Adrenal gland (tissue), 19 donors: ENCODE measurements at regions of chr15 and their contacts with region 1.

Region 1: GRCh38 chr15:55434989-55435825 is 26.9 kb downstream of the PIERCE2 start:
- DNase-seq: no peak
- H3K4me3 ChIP-seq: no peak overlapping the region
- H3K27ac ChIP-seq: no peak overlapping the region
- H3K4me1 ChIP-seq: no peaks in the 10 kb centered on the region
- H3K27me3 ChIP-seq: no peaks in the 10 kb centered on the region
- CTCF ChIP-seq: peak; percentile 33 to 58 (median 47)
- POLR2A ChIP-seq: no peak

Region 2: DNA sequence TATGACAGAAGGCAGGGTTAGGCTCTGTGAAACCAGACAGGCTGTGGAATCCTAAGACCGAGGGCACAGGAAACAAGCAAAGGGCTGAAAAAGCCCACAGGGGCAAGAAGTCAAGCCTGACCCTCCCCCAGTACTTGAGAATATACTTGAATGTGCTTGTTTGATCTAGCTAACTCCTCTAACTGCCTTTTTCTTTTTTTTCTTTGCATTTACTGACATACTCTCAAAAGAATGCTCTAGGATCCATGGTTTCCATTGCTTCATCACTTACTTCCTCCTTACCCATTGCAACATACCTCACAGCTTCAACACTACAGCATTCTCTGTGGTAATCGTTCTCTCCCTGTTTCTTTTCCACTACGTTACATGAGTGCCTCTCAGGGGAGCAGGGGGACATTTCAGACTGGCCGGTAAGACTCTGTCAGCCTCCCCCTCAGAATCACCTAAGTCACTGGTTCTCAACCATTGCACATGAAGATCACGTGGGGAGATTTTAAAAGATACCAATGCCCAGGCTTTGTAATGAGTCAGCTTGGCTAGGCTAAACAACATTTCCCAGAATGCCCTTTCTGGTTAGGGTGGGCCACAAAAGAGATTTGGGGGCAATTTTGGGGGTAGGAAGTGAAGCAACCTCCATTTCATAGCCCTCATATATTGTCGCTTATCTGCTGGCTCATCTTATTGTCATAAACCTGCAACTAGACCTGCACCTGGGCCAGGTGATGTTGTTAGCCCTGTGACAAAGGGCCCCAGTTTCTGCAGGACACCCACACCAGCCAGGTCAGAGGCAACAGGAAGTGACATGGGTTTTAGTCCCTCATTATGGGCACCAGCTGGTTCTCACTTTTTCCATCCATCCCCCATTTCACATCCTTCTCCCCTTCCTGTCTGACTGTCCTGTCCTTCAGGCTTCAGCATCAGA is 213.9 kb before region 1 on chr15:
- intact Hi-C with region 1: loop called in 1 of 2 experiments (anchors 10 kb)
- DNase-seq: peak in 3 of 7 donors; percentile 26 to 32 (median 27)
- H3K4me3 ChIP-seq: no peak overlapping the region
- H3K27ac ChIP-seq: peak overlapping the region in 2 of 5 donors; percentile 53 to 74
- H3K4me1 ChIP-seq: peaks cover 0 to 5% of the 10 kb centered on the region in 2 donors
- H3K27me3 ChIP-seq: no peaks in the 10 kb centered on the region
- CTCF ChIP-seq: no peak
- POLR2A ChIP-seq: no peak

Region 3: GRCh38 chr15:55290528-55291057 is 144.6 kb before region 1 on chr15:
- intact Hi-C with region 1: loop called in 1 of 2 experiments (anchors 10 kb)
- DNase-seq: peak; percentile 83 to 92 (median 88)
- H3K4me3 ChIP-seq: peak overlapping the region in 2 of 4 donors; percentile 75 to 87
- H3K27ac ChIP-seq: peak overlapping the region; percentile 83 to 94 (median 87)
- H3K4me1 ChIP-seq: peaks cover 0 to 15% of the 10 kb centered on the region in 2 donors
- H3K27me3 ChIP-seq: no peaks in the 10 kb centered on the region
- CTCF ChIP-seq: peak; percentile 71 to 96 (median 90)
- POLR2A ChIP-seq: no peak